ENCODE measurements at regions of chr16 and their contacts with region 1.

Region 1: DNA sequence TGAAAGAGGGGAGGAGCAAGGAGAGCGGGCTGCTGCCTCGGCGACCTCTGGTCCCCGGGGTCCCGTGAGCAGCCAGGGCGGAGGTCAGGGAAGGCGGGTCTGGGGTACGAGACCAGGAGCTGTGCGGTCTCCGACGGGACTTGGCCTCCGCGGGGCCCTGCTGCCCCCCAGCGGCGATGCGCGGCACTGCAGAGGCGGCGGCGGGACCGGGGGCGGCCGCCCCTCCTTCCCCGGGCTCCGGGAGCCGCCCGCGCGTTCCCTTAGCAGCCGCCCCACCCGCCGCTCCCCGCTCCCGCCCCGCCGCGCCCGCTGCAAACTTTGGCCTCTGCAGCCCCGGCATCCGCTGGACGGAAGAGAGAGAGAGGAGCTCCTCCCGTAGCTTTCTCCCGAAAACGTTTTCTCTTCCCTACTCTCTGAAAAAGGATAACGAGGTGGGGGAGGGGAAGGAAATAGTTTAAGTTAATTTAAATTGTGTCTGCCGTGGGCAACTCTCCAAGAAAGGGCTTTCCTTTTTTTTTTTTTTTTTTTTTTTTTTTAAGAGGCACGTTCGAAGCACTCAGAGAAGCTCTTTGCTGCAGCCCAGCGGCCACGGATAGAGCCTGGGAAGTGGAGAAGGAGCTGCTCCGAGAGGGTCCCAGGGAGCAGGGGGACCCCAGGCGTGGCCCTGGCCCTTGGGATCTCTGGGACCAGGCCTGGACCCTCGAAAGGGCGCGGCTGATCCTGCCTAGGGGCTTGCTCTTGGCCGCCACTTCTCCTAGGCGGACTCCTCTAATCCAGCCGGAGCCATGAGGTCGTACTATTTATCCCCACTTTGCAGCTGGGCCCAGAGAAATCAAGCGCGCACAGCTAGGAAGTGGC is 43.2 kb downstream of the C16orf82 start:
- DNase-seq: no peak
- H3K4me3 ChIP-seq: peak overlapping the region; percentile 38 to 56 (median 46)
- H3K27ac ChIP-seq: peak overlapping the region; percentile 19 to 48 (median 40)
- H3K4me1 ChIP-seq: peaks cover 3 to 17% (median 15%) of the 10 kb centered on the region in 4 donors
- H3K27me3 ChIP-seq: peaks cover 0 to 3% (median 0%) of the 10 kb centered on the region in 4 donors
- CTCF ChIP-seq: peak; percentile 80 to 96 (median 94)
- EP300 ChIP-seq: no peak
- POLR2A ChIP-seq: no peak

Region 2: GRCh38 chr16:25838724-25839186 is 1271.1 kb before region 1 on chr16:
- intact Hi-C with region 1: loop called (anchors 10 kb)
- DNase-seq: no peak
- H3K4me3 ChIP-seq: no peak overlapping the region
- H3K27ac ChIP-seq: no peak overlapping the region
- H3K4me1 ChIP-seq: peaks cover 0 to 5% (median 5%) of the 10 kb centered on the region in 4 donors
- H3K27me3 ChIP-seq: peaks cover 0 to 7% (median 0%) of the 10 kb centered on the region in 4 donors
- CTCF ChIP-seq: peak; percentile 61 to 73 (median 62)
- EP300 ChIP-seq: no peak
- POLR2A ChIP-seq: no peak

Region 3: DNA sequence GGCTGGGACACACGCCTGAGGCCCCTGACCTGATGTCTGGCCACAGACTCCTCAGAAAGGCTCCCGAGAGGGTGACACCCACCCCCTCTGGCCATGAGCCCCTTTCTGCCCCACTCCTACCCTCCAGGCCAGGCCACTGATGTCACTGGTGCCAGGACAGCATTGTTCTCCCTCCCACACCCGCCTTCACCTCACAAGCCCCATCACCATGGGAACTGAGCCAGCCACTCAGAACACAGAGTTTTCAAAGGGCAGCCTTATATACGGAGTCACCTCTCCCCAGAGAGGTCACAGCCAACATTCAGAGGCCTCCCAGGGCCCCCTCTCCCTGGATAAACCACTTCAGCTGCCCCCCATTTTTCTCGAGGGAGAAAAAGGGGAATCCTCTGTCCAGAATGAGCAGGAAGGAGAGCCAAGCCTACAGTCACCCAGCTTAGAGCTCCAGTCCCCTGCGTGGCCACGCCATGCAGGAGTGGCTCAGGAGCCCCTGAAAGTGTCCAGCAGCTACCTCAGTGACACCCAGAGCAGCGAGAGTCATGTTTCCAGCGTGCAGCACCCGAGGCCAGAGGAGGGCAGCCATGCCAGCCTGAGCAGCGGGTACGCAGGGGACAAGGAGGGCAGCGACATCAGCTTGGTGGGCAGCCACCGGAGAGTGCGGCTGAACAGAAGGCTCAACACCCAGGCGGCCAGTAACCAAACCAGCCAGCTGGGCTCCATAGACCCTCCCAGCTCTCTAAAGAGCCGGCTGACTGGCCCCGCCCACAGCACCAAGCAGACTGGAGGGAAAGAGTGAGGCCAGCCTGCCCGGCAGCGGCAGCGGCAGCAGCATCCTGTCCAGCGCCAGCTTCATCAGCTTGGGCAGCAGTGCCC is 43.0 kb before region 1 on chr16 and contains the start of gene C16orf82:
- intact Hi-C with region 1: no loop called
- DNase-seq: no peak
- H3K4me3 ChIP-seq: no peak within 1 kb of the TSS
- H3K27ac ChIP-seq: no peak within 1 kb of the TSS
- H3K4me1 ChIP-seq: peaks cover 0 to 5% (median 0%) of the 10 kb centered on the region in 4 donors
- H3K27me3 ChIP-seq: peaks cover 0 to 50% (median 0%) of the 10 kb centered on the region in 4 donors
- CTCF ChIP-seq: no peak
- EP300 ChIP-seq: no peak
- POLR2A ChIP-seq: no peak
- total RNA-seq, gene C16orf82: not detected